Activated CD8-positive, alpha-beta memory T cell treated with anti-CD3 and anti-CD28 coated beads, Interleukin-2, amount 10 ng/mL, durations not matched to agents 7 days and 5 days (primary cell): ENCODE measurements at regions of chr4 and their contacts with region 1.

Region 1: DNA sequence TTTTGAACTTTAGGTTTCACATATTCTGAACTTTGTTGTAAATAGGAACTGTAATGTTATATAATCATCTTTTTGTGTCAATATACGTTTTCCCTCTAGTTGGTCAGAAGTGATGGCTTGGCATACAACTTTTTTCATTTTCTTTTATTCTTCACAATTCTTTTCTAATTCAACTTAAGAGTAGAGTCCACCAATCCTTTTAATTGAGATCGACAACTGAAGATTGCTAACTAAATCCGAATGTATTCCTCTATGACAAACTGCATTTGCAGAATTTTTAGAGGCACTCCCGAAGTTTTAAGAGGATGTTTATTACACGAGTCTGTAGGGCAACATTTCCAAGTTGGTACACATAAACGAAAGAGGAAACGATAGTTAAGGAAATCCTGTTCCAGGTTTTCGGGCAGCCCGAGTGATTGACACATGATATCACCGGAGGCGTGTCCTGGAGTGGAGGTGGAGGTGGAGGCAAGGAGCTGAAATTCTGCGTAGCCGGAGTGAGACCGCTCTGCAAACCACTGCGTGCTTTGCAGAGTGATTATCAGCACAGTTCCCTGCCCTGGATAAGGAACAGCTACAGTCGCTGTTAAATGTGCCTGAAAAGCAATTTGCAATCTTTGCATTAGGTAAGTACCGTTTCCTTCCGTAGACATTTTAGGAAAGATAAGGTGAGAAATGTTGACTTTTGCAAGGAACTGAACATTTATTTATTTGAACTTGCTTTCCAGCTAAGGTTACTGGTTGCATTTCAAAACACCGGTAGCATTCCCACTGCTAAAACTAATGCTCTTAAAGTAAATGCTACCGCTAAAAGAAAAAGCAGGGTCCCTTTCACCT is at the start of gene SPRY1:
- DNase-seq: peak; percentile 95
- ATAC-seq: peak; percentile 63
- H3K4me3 Mint-ChIP-seq: peak within 1 kb of the TSS; percentile 92
- H3K27ac Mint-ChIP-seq: peak within 1 kb of the TSS; percentile 92
- H3K4me1 Mint-ChIP-seq: peaks cover 24% of the 10 kb centered on the region
- H3K27me3 Mint-ChIP-seq: peaks cover 7% of the 10 kb centered on the region
- total RNA-seq, gene SPRY1: 73.7 to 126 TPM

Region 2: DNA sequence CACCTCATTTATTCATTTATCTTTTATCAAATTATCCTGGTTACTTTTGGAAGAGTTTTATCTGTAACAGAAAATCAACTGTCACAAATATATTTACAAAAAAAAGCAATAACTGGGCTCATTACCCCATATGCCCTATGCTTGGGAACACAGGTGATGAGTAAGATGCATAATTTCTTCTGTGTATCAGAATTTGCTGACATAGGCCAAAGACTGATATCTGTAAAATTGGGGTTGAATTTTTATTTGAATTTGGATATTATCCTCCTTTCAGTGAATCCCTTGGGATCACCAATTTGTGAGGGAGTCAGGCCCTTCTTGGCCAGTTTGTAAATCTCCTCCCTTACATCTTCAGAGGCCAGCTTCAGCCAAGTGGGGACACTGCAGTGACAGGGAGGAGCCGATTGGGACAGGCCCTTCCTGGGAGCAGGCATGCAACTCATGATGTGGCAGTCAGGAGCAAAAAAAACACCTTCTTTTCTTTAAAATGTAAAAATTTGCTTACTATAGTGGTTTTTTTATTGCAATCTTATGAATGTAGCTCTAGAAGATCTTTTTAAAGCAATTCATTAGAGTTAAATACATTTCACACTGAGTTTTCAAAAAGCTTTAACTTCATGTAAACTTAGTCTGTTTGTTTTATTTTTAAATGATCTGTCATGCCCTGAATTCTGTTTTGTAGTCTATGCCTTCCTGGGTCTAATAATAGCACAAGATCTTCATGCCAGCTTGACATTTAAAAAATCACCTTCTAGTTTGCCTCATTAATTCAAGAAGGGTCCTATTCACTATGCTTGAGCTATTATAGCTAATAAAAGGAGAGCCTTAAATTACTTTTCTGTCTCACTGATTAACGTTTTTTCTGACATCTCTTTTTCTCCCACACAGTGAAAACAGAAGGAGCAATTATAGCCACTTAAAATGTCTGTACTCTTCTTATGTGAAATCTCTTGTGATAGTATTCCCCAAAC is 136.6 kb before region 1 on chr4:
- CTCF ChIA-PET with region 1: no interaction called
- DNase-seq: no peak
- ATAC-seq: no peak
- H3K4me3 Mint-ChIP-seq: no peak overlapping the region
- H3K27ac Mint-ChIP-seq: no peak overlapping the region
- H3K4me1 Mint-ChIP-seq: peaks cover 1% of the 10 kb centered on the region
- H3K27me3 Mint-ChIP-seq: no peaks in the 10 kb centered on the region

Region 3: DNA sequence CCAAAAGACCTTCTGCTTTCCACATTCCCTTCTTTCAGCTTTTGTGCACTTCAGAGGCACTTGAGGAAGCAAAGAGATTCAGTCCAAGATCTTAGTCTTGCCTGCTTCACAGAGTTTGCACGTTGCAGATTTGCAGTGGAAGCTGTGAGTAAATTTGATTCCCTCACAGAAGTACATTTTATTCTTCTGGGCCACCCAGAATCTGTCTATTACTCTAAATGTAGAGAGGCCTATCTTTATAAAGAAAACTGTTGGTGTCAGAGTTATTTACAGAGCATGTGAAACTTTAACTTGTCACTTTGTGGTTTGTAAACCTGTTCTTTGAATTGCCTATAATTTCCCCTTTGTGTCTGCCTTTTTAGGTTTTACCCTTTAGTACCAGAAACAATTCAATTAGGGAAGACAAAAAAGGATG is 15.6 kb after region 1 on chr4:
- CTCF ChIA-PET with region 1: interaction called, 15 read pairs
- DNase-seq: no peak
- ATAC-seq: peak; percentile 42
- H3K4me3 Mint-ChIP-seq: peak overlapping the region; percentile 52
- H3K27ac Mint-ChIP-seq: peak overlapping the region; percentile 85
- H3K4me1 Mint-ChIP-seq: peaks cover 56% of the 10 kb centered on the region
- H3K27me3 Mint-ChIP-seq: no peaks in the 10 kb centered on the region

Region 4: GRCh38 chr4:123418351-123418931 is 21.9 kb after region 1 on chr4:
- CTCF ChIA-PET with region 1: interaction called, 12 read pairs
- DNase-seq: peak; percentile 68
- ATAC-seq: peak; percentile 41
- H3K4me3 Mint-ChIP-seq: peak overlapping the region; percentile 35
- H3K27ac Mint-ChIP-seq: peak overlapping the region; percentile 93
- H3K4me1 Mint-ChIP-seq: peaks cover 79% of the 10 kb centered on the region
- H3K27me3 Mint-ChIP-seq: no peaks in the 10 kb centered on the region